Activated B cell treated with CpG ODN at 0.5 μM for 24 hours (primary cell): ENCODE measurements at regions of chr3 and their contacts with region 1.

Region 1: DNA sequence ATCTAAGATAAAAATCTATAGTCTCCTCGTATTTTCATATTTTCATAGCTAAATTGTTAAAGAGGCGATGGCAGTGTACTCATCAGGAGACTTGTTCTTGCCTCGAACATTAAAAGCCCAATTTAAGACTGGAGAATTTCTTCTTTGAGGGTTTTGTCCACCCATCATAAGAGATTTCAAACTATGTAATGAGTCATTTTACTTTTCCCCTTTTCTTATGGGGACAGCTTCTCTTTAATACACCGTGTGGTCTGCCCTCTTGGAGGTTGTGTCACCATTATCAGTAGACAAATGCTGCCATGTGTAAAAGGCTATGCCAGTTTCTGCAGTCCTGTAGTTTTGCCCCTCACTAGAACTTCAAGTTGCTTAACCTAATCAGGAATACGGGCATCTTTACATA is 16.9 kb downstream of the TGFBR2 start:
- DNase-seq: no peak
- ATAC-seq: peak; percentile 45
- H3K4me3 Mint-ChIP-seq: peak overlapping the region; percentile 70
- H3K27ac Mint-ChIP-seq: peak overlapping the region; percentile 91
- H3K4me1 Mint-ChIP-seq: peaks cover 94% of the 10 kb centered on the region
- H3K27me3 Mint-ChIP-seq: no peaks in the 10 kb centered on the region
- CTCF ChIP-seq: no peak

Region 2: GRCh38 chr3:29486096-29486495 is 1137.3 kb before region 1 on chr3:
- CTCF ChIA-PET with region 1: no interaction called
- POLR2A ChIA-PET with region 1: no interaction called
- intact Hi-C with region 1: no loop called
- DNase-seq: no peak
- ATAC-seq: no peak
- H3K4me3 Mint-ChIP-seq: no peak overlapping the region
- H3K27ac Mint-ChIP-seq: no peak overlapping the region
- H3K4me1 Mint-ChIP-seq: no peaks in the 10 kb centered on the region
- H3K27me3 Mint-ChIP-seq: no peaks in the 10 kb centered on the region
- CTCF ChIP-seq: no peak

Region 3: GRCh38 chr3:30437171-30437601 is 186.2 kb before region 1 on chr3:
- CTCF ChIA-PET with region 1: no interaction called
- POLR2A ChIA-PET with region 1: interaction called, 8 read pairs
- intact Hi-C with region 1: loop called (anchors 5 kb)
- DNase-seq: no peak
- ATAC-seq: no peak
- H3K4me3 Mint-ChIP-seq: no peak overlapping the region
- H3K27ac Mint-ChIP-seq: no peak overlapping the region
- H3K4me1 Mint-ChIP-seq: peaks cover 43% of the 10 kb centered on the region
- H3K27me3 Mint-ChIP-seq: no peaks in the 10 kb centered on the region
- CTCF ChIP-seq: no peak

Region 4: GRCh38 chr3:30511524-30512278 is 111.7 kb before region 1 on chr3:
- CTCF ChIA-PET with region 1: no interaction called
- POLR2A ChIA-PET with region 1: no interaction called
- intact Hi-C with region 1: no loop called
- DNase-seq: no peak
- ATAC-seq: no peak
- H3K4me3 Mint-ChIP-seq: no peak overlapping the region
- H3K27ac Mint-ChIP-seq: no peak overlapping the region
- H3K4me1 Mint-ChIP-seq: peaks cover 17% of the 10 kb centered on the region
- H3K27me3 Mint-ChIP-seq: no peaks in the 10 kb centered on the region
- CTCF ChIP-seq: no peak

Region 5: DNA sequence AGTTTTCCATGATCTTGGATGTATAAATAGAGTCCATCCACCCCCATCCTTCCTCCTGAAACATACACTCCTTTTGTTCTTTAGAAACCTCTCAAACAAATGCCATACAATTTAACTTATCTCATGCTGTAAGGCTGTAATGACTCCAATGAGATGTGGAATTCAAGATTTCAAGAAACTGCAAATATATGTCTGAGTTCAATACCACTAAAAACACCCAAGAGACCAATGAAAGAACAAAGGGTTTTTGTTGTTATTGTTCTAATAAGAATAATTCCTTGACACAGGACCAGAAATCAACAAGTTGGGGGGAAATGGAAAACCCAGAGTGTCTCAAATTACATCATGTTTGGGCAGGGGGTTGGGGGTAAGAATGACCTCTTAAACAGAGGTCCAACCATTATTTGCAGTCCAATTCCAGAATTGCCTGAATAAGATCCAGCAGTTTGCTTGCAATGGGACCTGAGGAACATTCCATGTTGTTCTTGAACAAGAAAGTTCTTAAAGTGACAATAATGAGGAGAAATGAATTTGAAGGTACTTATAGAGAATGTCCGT is 65.5 kb before region 1 on chr3:
- CTCF ChIA-PET with region 1: no interaction called
- POLR2A ChIA-PET with region 1: no interaction called
- intact Hi-C with region 1: no loop called
- DNase-seq: no peak
- ATAC-seq: no peak
- H3K4me3 Mint-ChIP-seq: no peak overlapping the region
- H3K27ac Mint-ChIP-seq: no peak overlapping the region
- H3K4me1 Mint-ChIP-seq: peaks cover 10% of the 10 kb centered on the region
- H3K27me3 Mint-ChIP-seq: no peaks in the 10 kb centered on the region
- CTCF ChIP-seq: no peak

Region 6: DNA sequence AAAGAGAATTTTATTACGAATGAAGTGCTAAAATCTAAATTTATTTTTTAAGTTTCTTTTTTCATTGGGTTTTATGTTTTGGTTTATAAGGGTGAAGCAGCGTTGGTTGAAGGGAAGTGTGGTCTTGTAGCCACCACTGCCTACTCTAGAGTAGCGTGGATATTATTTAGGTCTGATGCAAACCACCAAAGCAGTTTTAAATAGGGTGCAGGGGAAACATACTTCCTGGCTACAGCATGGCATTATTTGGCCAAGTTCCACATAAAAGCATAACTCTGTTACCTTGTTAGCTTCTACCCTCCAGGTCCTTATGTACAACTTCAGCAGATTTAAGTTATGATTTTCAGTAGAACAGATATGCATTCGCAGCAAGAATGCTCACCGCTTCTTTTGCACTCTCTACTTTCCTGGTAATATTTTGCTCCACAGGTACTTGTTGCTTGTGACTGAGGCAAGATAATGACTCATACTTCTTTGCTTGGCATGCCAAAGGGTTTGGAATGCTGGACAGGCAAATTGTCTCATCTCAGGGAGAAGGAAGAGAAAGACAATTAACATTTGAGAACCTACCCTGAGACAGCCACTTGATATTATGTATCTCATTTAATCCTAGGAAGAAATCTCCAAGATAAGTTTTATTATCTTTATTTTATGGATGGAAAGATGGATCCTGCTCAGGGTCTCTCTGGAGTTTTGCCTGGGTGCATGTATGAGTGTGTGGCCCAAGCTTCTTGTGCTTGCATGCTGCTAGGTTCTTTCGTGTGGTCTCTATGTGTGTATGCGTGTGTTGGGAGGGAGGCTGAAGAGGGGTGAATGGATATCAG is 11.5 kb before region 1 on chr3:
- CTCF ChIA-PET with region 1: interaction called, 9 read pairs
- POLR2A ChIA-PET with region 1: interaction called, 79 read pairs
- intact Hi-C with region 1: loop called (anchors 1 kb)
- DNase-seq: no peak
- ATAC-seq: no peak
- H3K4me3 Mint-ChIP-seq: peak overlapping the region; percentile 97
- H3K27ac Mint-ChIP-seq: peak overlapping the region; percentile 69
- H3K4me1 Mint-ChIP-seq: peaks cover 88% of the 10 kb centered on the region
- H3K27me3 Mint-ChIP-seq: no peaks in the 10 kb centered on the region
- CTCF ChIP-seq: no peak

Region 7: GRCh38 chr3:30634761-30635735 is 11.7 kb after region 1 on chr3:
- CTCF ChIA-PET with region 1: interaction called, 5 read pairs
- POLR2A ChIA-PET with region 1: interaction called, 15 read pairs
- intact Hi-C with region 1: loop called (anchors 1 kb)
- DNase-seq: no peak
- ATAC-seq: no peak
- H3K4me3 Mint-ChIP-seq: peak overlapping the region; percentile 48
- H3K27ac Mint-ChIP-seq: peak overlapping the region; percentile 91
- H3K4me1 Mint-ChIP-seq: peaks cover 99% of the 10 kb centered on the region
- H3K27me3 Mint-ChIP-seq: no peaks in the 10 kb centered on the region
- CTCF ChIP-seq: no peak

Region 8: DNA sequence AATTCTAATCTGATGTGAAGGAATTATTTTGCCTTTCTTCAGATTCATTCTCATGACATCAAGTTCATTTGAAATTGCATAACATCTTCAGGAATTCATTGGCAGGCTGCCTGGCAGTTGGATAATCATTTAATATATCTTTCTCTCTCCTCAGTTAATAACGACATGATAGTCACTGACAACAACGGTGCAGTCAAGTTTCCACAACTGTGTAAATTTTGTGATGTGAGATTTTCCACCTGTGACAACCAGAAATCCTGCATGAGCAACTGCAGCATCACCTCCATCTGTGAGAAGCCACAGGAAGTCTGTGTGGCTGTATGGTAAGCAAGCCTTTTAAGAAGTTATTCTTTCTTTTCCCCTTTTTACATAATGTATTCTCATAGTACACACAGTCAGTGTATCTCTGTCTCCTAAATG is 21.3 kb after region 1 on chr3:
- CTCF ChIA-PET with region 1: interaction called, 11 read pairs
- POLR2A ChIA-PET with region 1: interaction called, 16 read pairs
- intact Hi-C with region 1: loop called (anchors 1 kb)
- DNase-seq: no peak
- ATAC-seq: peak; percentile 38
- H3K4me3 Mint-ChIP-seq: peak overlapping the region; percentile 68
- H3K27ac Mint-ChIP-seq: peak overlapping the region; percentile 91
- H3K4me1 Mint-ChIP-seq: peaks cover 98% of the 10 kb centered on the region
- H3K27me3 Mint-ChIP-seq: no peaks in the 10 kb centered on the region
- CTCF ChIP-seq: no peak

Region 9: DNA sequence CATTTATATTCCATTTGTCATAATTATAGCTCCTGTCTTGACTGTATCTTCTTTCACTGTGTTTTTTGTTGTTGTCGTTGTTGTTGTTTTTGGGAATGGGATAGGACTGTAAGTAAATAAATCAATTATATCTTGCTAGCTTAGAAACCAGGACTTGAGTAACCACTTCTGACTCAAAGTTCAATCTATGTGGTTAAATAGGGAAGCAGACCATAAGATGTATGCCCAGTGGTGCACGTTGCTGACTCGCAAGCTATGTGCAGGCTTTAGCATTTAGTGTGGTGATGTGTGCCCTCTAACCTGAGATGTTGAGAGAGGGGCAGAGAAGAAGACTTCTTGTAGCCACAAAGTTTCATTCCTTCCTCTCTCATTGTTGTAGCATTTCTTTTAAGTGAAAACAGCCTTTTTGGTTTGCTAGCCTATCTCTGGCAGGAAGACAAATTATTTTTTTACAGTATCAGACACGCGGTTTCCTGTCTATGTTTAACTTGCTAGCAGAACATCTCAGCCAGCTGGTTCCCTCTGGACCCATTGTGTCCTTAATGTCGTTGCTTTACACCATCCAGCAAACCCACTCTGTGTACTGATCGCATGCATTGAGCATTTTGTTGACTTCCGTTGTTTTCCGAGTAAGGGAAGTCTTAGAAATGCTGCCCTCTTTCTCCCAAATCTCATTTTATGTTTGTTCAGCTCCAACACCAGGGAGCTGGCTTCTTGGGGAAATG is 35.1 kb after region 1 on chr3:
- CTCF ChIA-PET with region 1: interaction called, 11 read pairs
- POLR2A ChIA-PET with region 1: interaction called, 13 read pairs
- intact Hi-C with region 1: loop called (anchors 1 kb)
- DNase-seq: no peak
- ATAC-seq: peak; percentile 87
- H3K4me3 Mint-ChIP-seq: peak overlapping the region; percentile 12
- H3K27ac Mint-ChIP-seq: peak overlapping the region; percentile 82
- H3K4me1 Mint-ChIP-seq: peaks cover 94% of the 10 kb centered on the region
- H3K27me3 Mint-ChIP-seq: no peaks in the 10 kb centered on the region
- CTCF ChIP-seq: no peak

Region 10: DNA sequence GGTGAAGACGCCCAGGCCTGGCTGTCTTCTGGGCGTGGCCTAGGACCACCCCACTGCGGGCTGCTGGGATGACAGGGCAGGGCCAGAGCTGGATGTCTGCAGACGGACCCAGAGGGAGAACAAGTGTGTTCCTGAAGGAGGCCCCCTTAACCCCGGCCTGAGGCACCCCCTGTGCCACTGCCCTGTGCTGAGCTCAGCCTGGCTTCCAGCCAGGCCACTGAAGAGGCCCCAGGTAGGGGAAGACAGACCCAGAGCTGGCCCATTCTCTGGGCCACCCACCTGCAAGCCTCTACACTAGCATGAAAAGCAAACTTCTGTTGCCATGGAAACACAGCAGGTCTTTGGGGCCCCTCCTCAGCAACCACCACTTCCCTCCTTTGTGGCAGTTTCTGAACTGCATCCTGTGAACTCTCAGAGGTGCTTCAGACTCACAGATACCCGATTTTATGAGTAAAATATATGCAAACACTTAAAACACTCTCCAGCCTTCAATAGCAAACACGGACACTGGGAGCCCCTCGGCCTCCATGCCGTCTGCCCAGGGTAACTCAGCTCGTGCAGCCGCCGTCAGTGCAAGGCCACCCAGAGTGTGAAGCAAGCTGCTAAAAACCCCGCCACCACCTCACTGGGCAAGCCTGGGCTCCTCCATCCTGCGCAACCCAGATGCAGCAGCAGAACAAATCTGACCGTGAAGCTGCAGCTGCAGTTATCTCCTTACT is 1836.8 kb after region 1 on chr3:
- CTCF ChIA-PET with region 1: no interaction called
- POLR2A ChIA-PET with region 1: no interaction called
- intact Hi-C with region 1: no loop called
- DNase-seq: peak; percentile 61
- ATAC-seq: peak; percentile 72
- H3K4me3 Mint-ChIP-seq: peak overlapping the region; percentile 74
- H3K27ac Mint-ChIP-seq: no peak overlapping the region
- H3K4me1 Mint-ChIP-seq: peaks cover 55% of the 10 kb centered on the region
- H3K27me3 Mint-ChIP-seq: no peaks in the 10 kb centered on the region
- CTCF ChIP-seq: no peak